ENCODE measurements at regions of chr6 and their contacts with region 1.

Region 1: DNA sequence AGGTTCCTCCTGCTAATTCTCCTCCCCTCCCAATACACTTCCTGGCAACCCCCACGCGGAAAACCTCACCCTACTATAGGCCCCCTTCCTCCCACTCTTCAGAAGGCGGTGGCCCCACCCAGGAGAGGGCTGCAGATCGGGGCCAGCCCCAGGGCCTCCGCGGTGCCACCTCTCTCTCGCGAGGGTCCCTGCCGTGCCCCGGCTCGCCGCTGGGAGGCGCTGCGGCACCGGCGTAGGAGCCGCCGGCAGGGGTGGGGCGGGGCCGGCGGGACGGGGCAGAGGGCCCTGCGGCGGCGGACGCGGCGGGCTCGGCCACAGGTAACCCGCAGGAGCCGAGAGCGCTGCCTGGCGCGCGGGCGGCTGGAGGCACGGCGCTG is at the start of gene ANKRD6:
- DNase-seq: peak; percentile 80 to 88
- ATAC-seq: peak; percentile 96 to 99 (median 98)
- H3K4me3 ChIP-seq: peak within 1 kb of the TSS; percentile 88
- H3K27ac ChIP-seq: no peak within 1 kb of the TSS
- H3K4me1 ChIP-seq: no peaks in the 10 kb centered on the region
- H3K27me3 ChIP-seq: peaks cover 0 to 3% (median 0%) of the 10 kb centered on the region in 3 donors
- CTCF ChIP-seq: peak; percentile 97
- total RNA-seq, gene ANKRD6: 2.4 to 9.0 (median 4.6) TPM

Region 2: DNA sequence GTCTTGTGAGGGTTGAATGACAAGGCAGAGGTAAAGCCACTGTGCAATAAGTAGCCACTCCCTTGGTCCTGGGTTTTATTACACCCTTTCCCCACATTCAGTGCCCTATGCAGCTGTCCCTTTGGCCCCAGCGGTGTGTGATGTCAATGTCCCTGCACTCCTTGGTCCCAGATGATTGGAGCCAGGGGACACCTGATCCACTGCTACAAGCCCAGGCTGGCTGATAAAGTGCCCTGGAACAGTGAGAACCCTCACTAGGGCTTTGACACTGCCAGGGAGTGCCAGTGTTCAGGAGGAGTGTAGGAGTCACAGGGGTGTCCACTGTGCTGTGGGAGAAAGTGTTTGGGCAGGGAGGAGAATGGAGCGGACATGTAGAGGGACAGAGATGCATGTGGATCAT is 246.1 kb before region 1 on chr6:
- intact Hi-C with region 1: no loop called
- DNase-seq: peak; percentile 66 to 87
- ATAC-seq: peak; percentile 99
- H3K4me3 ChIP-seq: peak overlapping the region; percentile 24
- H3K27ac ChIP-seq: peak overlapping the region; percentile 83
- H3K4me1 ChIP-seq: peaks cover 15% of the 10 kb centered on the region
- H3K27me3 ChIP-seq: no peaks in the 10 kb centered on the region
- CTCF ChIP-seq: no peak

Region 3: GRCh38 chr6:89475634-89476033 is 42.8 kb after region 1 on chr6:
- intact Hi-C with region 1: no loop called
- DNase-seq: no peak
- ATAC-seq: peak in 1 of 4 donors; percentile 40
- H3K4me3 ChIP-seq: no peak overlapping the region
- H3K27ac ChIP-seq: no peak overlapping the region
- H3K4me1 ChIP-seq: no peaks in the 10 kb centered on the region
- H3K27me3 ChIP-seq: no peaks in the 10 kb centered on the region
- CTCF ChIP-seq: no peak

Region 4: GRCh38 chr6:89610149-89610642 is 177.3 kb after region 1 on chr6:
- intact Hi-C with region 1: loop called (anchors 1 to 2 kb)
- DNase-seq: peak; percentile 68 to 79
- ATAC-seq: peak; percentile 71 to 92 (median 84)
- H3K4me3 ChIP-seq: no peak overlapping the region
- H3K27ac ChIP-seq: no peak overlapping the region
- H3K4me1 ChIP-seq: no peaks in the 10 kb centered on the region
- H3K27me3 ChIP-seq: no peaks in the 10 kb centered on the region
- CTCF ChIP-seq: peak; percentile 90

Region 5: DNA sequence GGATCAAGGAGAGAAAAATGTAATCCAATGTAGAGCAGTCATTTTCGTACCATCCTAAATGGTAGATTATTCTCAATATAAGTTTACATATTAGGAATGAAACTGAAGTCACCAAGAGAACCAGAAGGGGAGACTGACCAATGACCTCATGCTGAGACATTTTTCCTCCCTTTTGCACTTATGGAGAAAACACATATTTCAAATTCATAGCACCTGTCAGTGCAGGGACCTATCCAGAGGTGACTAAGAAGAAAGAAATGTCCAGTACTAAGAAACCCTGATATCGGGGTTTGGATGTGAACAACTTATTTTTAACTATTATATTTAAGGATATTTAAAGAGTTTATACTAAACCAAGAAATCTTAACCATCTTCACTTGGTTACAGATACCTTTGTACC is 222.3 kb after region 1 on chr6:
- intact Hi-C with region 1: no loop called
- DNase-seq: no peak
- ATAC-seq: no peak
- H3K4me3 ChIP-seq: no peak overlapping the region
- H3K27ac ChIP-seq: no peak overlapping the region
- H3K4me1 ChIP-seq: peaks cover under 1% of the 10 kb centered on the region
- H3K27me3 ChIP-seq: no peaks in the 10 kb centered on the region
- CTCF ChIP-seq: no peak

Region 6: DNA sequence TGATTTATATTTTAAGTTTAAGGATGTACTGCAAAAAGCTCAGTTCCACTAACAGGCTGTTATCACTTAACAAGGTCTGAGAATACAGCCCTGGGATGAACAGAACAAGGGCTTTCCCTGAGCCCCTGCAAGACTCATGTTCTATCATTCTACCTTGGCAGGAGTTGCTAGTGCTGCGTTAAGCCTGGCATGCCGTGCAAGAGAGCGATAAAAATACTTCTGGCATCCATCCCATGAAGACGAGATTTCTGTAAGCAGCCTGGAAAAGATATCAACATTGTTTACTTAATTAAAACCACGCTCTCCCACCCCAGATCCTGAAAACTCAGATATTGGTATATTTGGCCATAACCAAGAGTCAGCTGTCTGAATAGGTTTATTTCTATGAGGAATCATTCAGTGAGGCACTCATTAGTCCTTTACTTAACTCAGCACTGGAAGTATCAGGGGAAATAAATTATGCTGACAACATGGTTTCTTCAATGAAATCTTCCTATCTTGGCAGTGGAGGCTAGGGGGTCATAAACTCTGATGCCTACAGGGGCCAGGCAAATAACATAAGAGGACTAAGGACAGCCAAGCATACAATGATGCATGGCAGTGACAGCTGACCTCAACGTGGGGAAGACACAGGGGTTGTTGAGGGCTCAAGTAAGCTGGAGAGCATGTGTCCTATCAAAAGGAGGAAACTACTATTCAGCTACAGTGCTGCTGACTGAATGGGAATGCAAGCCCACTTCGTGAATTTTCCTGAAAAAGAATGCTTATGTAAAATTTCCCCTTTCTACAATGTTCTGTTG is 243.3 kb after region 1 on chr6:
- intact Hi-C with region 1: loop called in 1 of 2 experiments (anchors 5 kb)
- DNase-seq: no peak
- ATAC-seq: peak in 3 of 4 donors; percentile 67 to 82 (median 78)
- H3K4me3 ChIP-seq: peak overlapping the region; percentile 39
- H3K27ac ChIP-seq: peak overlapping the region; percentile 74
- H3K4me1 ChIP-seq: peaks cover 27% of the 10 kb centered on the region
- H3K27me3 ChIP-seq: no peaks in the 10 kb centered on the region
- CTCF ChIP-seq: no peak